ENCODE measurements at regions of chr7 and their contacts with region 1.

Region 1: DNA sequence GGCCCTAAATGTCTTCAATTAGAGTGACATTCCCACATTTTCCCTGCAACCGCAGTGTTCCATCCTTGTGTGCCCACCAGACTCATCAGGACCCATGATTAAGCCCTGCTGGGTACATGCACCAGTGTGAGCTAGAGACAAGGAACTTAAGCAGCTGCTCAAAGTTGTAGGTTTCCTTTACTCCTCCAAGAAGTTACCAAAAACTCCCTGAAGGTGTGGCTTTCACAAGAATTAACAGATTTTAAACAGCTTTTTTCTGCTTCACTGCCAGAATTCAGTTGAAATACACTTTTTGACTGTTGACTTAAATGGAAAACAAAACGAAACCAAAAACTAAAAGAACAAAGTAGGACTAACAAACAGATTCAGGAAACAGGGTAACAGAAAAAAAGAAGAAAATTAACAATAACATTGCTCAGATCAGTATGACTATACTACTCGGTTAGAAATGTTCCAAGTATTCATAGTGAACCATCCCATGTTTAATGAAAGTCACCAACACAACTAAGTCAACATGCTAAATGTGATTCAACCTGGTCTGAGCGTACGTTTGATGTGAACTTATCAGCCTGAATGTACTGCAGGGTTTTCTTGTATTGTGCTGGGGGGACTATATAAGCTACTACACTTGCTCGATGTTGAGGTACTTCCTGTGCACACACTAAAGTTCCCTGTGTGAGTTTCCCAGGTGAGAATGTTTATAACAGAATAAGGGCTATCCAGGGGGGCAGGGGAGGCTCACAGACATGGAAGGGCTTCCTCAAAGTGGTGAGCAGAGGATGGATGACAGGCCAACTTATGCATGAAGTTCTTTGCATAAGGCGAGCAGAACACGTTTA is 22.2 kb downstream of the SLC37A3 start:
- DNase-seq: peak in 2 of 9 experiments; percentile 36 to 61
- ATAC-seq: peak; percentile 89
- H3K4me3 ChIP-seq: peak overlapping the region; percentile 34 to 41
- H3K4me3 Mint-ChIP-seq: peak overlapping the region; percentile 86
- H3K27ac ChIP-seq: peak overlapping the region; percentile 52 to 85
- H3K27ac Mint-ChIP-seq: peak overlapping the region; percentile 94
- H3K4me1 ChIP-seq: peaks cover 16% of the 10 kb centered on the region
- H3K4me1 Mint-ChIP-seq: peaks cover 15% of the 10 kb centered on the region
- H3K27me3 ChIP-seq: no peaks in the 10 kb centered on the region
- H3K27me3 Mint-ChIP-seq: no peaks in the 10 kb centered on the region
- CTCF ChIP-seq: no peak

Region 2: DNA sequence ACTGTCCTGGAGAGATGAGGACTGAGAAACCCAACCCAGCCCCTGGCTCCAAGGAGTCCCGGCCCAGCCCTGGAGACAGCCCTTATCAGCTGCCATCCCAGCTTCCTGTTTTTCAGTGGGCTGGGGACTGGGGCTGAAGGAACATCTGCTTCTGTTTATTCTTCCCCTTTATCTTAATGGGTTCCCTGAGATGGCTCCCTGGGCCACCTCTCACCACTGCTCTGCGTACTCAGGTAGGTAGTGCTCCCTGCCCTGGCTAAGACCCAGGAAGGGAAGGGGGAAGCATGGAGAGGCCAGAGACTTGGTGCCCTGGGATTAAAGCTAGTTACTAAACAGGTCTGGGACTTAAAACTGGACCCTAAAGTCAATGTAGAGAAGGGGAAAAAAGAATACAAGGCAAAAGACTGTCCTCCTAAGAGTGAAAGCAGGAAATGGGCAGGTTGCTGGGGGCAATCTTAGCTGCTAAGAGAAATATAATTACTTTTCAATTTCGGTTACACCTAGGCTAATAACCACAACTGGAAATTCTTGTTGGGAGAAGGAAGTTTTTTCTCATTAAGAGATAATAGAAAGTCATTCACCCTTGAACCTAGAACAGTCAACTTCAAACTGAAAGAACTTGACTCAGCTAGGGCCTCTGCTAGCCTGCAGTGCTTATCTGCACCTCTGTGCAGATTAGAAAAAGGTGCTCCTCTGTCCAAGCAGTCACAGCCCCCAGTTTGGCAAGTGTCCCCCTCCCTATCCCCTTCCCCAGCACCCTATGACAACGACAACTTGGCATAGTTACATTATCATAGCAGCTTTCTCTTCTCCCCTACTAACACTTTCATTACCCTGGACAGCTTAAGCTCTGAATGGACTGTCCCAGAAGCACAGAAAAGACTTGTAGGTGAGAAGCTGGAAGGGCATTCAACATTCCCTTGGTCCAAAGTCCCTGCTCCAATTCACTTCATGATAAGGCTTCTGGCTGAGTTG is 133.8 kb before region 1 on chr7:
- CTCF ChIA-PET with region 1: no interaction called
- POLR2A ChIA-PET with region 1: no interaction called
- intact Hi-C with region 1: no loop called
- DNase-seq: no peak
- ATAC-seq: no peak
- H3K4me3 ChIP-seq: no peak overlapping the region
- H3K4me3 Mint-ChIP-seq: no peak overlapping the region
- H3K27ac ChIP-seq: no peak overlapping the region
- H3K27ac Mint-ChIP-seq: no peak overlapping the region
- H3K4me1 ChIP-seq: peaks cover 10% of the 10 kb centered on the region
- H3K4me1 Mint-ChIP-seq: peaks cover 15% of the 10 kb centered on the region
- H3K27me3 ChIP-seq: no peaks in the 10 kb centered on the region
- H3K27me3 Mint-ChIP-seq: no peaks in the 10 kb centered on the region
- CTCF ChIP-seq: no peak

Region 3: GRCh38 chr7:140390466-140391190 is 14.5 kb after region 1 on chr7:
- CTCF ChIA-PET with region 1: no interaction called
- POLR2A ChIA-PET with region 1: interaction called, 13 read pairs
- intact Hi-C with region 1: loop called in 1 of 2 experiments (anchors 1 kb)
- DNase-seq: peak in 1 of 9 experiments; percentile 20
- ATAC-seq: no peak
- H3K4me3 ChIP-seq: no peak overlapping the region
- H3K4me3 Mint-ChIP-seq: no peak overlapping the region
- H3K27ac ChIP-seq: no peak overlapping the region
- H3K27ac Mint-ChIP-seq: no peak overlapping the region
- H3K4me1 ChIP-seq: peaks cover 12% of the 10 kb centered on the region
- H3K4me1 Mint-ChIP-seq: peaks cover 12% of the 10 kb centered on the region
- H3K27me3 ChIP-seq: no peaks in the 10 kb centered on the region
- H3K27me3 Mint-ChIP-seq: no peaks in the 10 kb centered on the region
- CTCF ChIP-seq: no peak

Region 4: GRCh38 chr7:141057788-141058187 is 681.7 kb after region 1 on chr7:
- CTCF ChIA-PET with region 1: no interaction called
- POLR2A ChIA-PET with region 1: no interaction called
- intact Hi-C with region 1: no loop called
- DNase-seq: no peak
- ATAC-seq: no peak
- H3K4me3 ChIP-seq: no peak overlapping the region
- H3K4me3 Mint-ChIP-seq: no peak overlapping the region
- H3K27ac ChIP-seq: no peak overlapping the region
- H3K27ac Mint-ChIP-seq: no peak overlapping the region
- H3K4me1 ChIP-seq: peaks cover 14% of the 10 kb centered on the region
- H3K4me1 Mint-ChIP-seq: peaks cover 15% of the 10 kb centered on the region
- H3K27me3 ChIP-seq: no peaks in the 10 kb centered on the region
- H3K27me3 Mint-ChIP-seq: peaks cover 2% of the 10 kb centered on the region
- CTCF ChIP-seq: no peak